ENCODE measurements at regions of chr16 and their contacts with region 1.

Region 1: DNA sequence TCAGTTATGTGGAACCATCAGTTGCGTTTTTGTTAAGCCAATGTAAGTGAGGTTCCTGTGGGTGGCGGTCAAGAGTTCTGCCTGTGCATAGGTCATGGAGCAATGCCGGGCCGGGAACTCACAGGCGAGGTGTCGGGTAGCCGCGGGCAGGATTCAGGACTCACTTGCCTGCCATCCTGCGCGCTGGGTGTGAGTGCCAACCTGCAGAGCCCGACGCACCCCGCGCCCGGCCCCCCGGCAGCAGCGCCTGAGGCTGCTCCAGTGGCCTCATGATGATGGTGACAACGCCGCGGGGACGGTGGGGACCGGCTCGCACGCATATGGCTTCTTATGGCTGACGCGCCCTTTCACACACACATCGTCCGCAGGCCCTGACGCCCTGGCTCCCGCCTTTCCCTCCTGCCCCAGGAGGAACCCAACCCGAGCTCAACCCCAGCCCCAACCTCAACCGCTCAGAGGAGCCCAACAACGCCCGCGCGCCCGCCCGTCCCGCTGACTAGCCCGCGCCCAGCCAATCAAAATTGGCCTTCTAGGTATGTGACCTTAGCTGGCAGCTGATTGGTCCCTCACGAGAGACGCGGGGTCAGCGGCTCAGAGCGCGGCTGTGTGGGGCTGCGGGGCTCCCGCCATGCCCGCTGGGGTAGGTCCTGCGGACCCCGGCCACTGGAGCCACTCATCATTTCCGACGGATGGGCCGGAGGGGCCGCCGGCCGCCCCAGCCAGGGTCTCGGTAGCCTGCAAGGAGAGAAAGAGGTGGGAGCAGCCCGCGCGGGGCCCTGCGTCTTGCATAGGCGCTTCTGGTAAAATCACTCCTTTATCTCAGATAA is at the start of gene C16orf95:
- DNase-seq: peak; percentile 93 to 98 (median 96)
- ATAC-seq: peak; percentile 91
- H3K4me3 ChIP-seq: peak within 1 kb of the TSS; percentile 97
- H3K4me3 Mint-ChIP-seq: peak within 1 kb of the TSS; percentile 97
- H3K27ac ChIP-seq: peak within 1 kb of the TSS; percentile 77 to 78
- H3K27ac Mint-ChIP-seq: peak within 1 kb of the TSS; percentile 93
- H3K4me1 ChIP-seq: peaks cover 14% of the 10 kb centered on the region
- H3K4me1 Mint-ChIP-seq: peaks cover 21% of the 10 kb centered on the region
- H3K27me3 ChIP-seq: no peaks in the 10 kb centered on the region
- H3K27me3 Mint-ChIP-seq: no peaks in the 10 kb centered on the region
- CTCF ChIP-seq: peak; percentile 53
- total RNA-seq, gene C16orf95: 0.74 to 1.2 TPM

Region 2: GRCh38 chr16:87288753-87289362 is 28.3 kb before region 1 on chr16:
- CTCF ChIA-PET with region 1: no interaction called
- POLR2A ChIA-PET with region 1: no interaction called
- intact Hi-C with region 1: no loop called
- DNase-seq: no peak
- ATAC-seq: no peak
- H3K4me3 ChIP-seq: no peak overlapping the region
- H3K4me3 Mint-ChIP-seq: no peak overlapping the region
- H3K27ac ChIP-seq: no peak overlapping the region
- H3K27ac Mint-ChIP-seq: no peak overlapping the region
- H3K4me1 ChIP-seq: no peaks in the 10 kb centered on the region
- H3K4me1 Mint-ChIP-seq: no peaks in the 10 kb centered on the region
- H3K27me3 ChIP-seq: no peaks in the 10 kb centered on the region
- H3K27me3 Mint-ChIP-seq: no peaks in the 10 kb centered on the region
- CTCF ChIP-seq: no peak

Region 3: GRCh38 chr16:87380859-87381258 is 63.7 kb after region 1 on chr16:
- CTCF ChIA-PET with region 1: interaction called, 11 read pairs
- POLR2A ChIA-PET with region 1: interaction called, 45 read pairs
- intact Hi-C with region 1: loop called in 1 of 2 experiments (anchors 2 kb)
- DNase-seq: peak in 1 of 14 experiments; percentile 27
- ATAC-seq: no peak
- H3K4me3 ChIP-seq: peak overlapping the region; percentile 1
- H3K4me3 Mint-ChIP-seq: peak overlapping the region; percentile 93
- H3K27ac ChIP-seq: no peak overlapping the region
- H3K27ac Mint-ChIP-seq: peak overlapping the region; percentile 84
- H3K4me1 ChIP-seq: peaks cover 56% of the 10 kb centered on the region
- H3K4me1 Mint-ChIP-seq: peaks cover 59% of the 10 kb centered on the region
- H3K27me3 ChIP-seq: no peaks in the 10 kb centered on the region
- H3K27me3 Mint-ChIP-seq: peaks cover 4% of the 10 kb centered on the region
- CTCF ChIP-seq: no peak

Region 4: GRCh38 chr16:87387942-87388817 is 71.0 kb after region 1 on chr16:
- CTCF ChIA-PET with region 1: interaction called, 11 read pairs
- POLR2A ChIA-PET with region 1: interaction called, 45 read pairs
- intact Hi-C with region 1: loop called in 1 of 2 experiments (anchors 1 kb)
- DNase-seq: peak; percentile 74 to 97 (median 82)
- ATAC-seq: peak; percentile 71
- H3K4me3 ChIP-seq: peak overlapping the region; percentile 8
- H3K4me3 Mint-ChIP-seq: peak overlapping the region; percentile 79
- H3K27ac ChIP-seq: peak overlapping the region; percentile 70 to 82
- H3K27ac Mint-ChIP-seq: peak overlapping the region; percentile 98
- H3K4me1 ChIP-seq: peaks cover 49% of the 10 kb centered on the region
- H3K4me1 Mint-ChIP-seq: peaks cover 49% of the 10 kb centered on the region
- H3K27me3 ChIP-seq: no peaks in the 10 kb centered on the region
- H3K27me3 Mint-ChIP-seq: peaks cover 4% of the 10 kb centered on the region
- CTCF ChIP-seq: no peak

Region 5: GRCh38 chr16:87393680-87394055 is 76.5 kb after region 1 on chr16:
- CTCF ChIA-PET with region 1: interaction called, 3 read pairs
- POLR2A ChIA-PET with region 1: interaction called, 15 read pairs
- intact Hi-C with region 1: loop called (anchors 1 to 2 kb)
- DNase-seq: no peak
- ATAC-seq: no peak
- H3K4me3 ChIP-seq: peak overlapping the region; percentile 84
- H3K4me3 Mint-ChIP-seq: peak overlapping the region; percentile 95
- H3K27ac ChIP-seq: peak overlapping the region in 1 of 2 donors; percentile 57
- H3K27ac Mint-ChIP-seq: peak overlapping the region; percentile 90
- H3K4me1 ChIP-seq: peaks cover 35% of the 10 kb centered on the region
- H3K4me1 Mint-ChIP-seq: peaks cover 50% of the 10 kb centered on the region
- H3K27me3 ChIP-seq: no peaks in the 10 kb centered on the region
- H3K27me3 Mint-ChIP-seq: no peaks in the 10 kb centered on the region
- CTCF ChIP-seq: no peak

Region 6: GRCh38 chr16:87492721-87493607 is 175.8 kb after region 1 on chr16 and contains the start of gene ZCCHC14:
- CTCF ChIA-PET with region 1: no interaction called
- POLR2A ChIA-PET with region 1: interaction called, 4 read pairs
- intact Hi-C with region 1: loop called in 1 of 2 experiments (anchors 5 kb)
- DNase-seq: peak; percentile 98 to 99 (median 99)
- ATAC-seq: peak; percentile 91
- H3K4me3 ChIP-seq: peak within 1 kb of the TSS; percentile 61
- H3K4me3 Mint-ChIP-seq: peak within 1 kb of the TSS; percentile 94
- H3K27ac ChIP-seq: no peak within 1 kb of the TSS
- H3K27ac Mint-ChIP-seq: peak within 1 kb of the TSS; percentile 81
- H3K4me1 ChIP-seq: peaks cover 54% of the 10 kb centered on the region
- H3K4me1 Mint-ChIP-seq: peaks cover 47% of the 10 kb centered on the region
- H3K27me3 ChIP-seq: peaks cover 0 to 3% of the 10 kb centered on the region in 2 experiments
- H3K27me3 Mint-ChIP-seq: no peaks in the 10 kb centered on the region
- CTCF ChIP-seq: no peak
- total RNA-seq, gene ZCCHC14: 16.4 to 18.3 TPM

Measured in CD4-positive, alpha-beta T cell (primary cell).